ENCODE measurements at regions of chr22 and their contacts with region 1.

Region 1: DNA sequence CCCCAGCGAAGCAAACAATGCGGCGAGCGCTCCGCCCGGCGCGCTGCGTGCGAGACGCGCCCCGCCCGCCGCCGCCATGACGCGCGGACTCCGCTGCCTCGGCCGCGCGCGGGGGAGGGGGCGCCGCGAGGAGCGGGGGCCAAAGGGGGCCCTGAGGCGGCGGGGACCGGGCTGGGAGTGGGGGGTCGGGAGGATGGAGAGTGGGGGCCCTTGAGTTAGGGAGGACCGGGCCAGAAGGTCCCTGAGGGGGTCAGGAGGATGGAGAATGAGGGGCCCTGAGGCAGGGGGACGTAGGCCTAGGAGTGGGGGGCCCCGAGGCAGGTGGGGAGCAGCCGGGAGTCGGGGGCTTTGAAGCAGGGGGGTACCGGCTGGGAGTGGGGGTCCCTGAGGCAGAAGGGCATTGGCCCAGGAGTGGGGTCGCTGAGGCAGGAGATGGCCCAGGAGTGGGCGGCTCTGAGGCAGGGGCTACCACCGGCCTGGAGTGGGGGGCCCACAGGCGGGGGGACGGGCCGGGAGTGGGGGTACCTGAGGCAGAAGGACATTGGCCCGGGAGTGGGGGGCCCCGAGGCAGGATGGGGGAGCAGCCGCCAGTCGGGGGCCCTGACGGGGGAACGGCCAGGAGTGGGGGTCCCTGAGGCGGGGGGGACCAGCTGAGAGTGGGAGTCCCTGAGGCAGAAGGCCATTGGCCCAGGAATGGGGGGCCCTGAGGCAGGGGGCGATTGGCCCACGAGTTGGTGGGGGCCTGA is at the start of gene BRD1:
- DNase-seq: peak in 11 of 14 experiments; percentile 37 to 87 (median 64)
- ATAC-seq: peak; percentile 56
- H3K4me3 ChIP-seq: peak within 1 kb of the TSS; percentile 82
- H3K4me3 Mint-ChIP-seq: peak within 1 kb of the TSS; percentile 98
- H3K27ac ChIP-seq: peak within 1 kb of the TSS; percentile 73 to 80
- H3K27ac Mint-ChIP-seq: peak within 1 kb of the TSS; percentile 97
- H3K4me1 ChIP-seq: peaks cover 63% of the 10 kb centered on the region
- H3K4me1 Mint-ChIP-seq: peaks cover 46% of the 10 kb centered on the region
- H3K27me3 ChIP-seq: no peaks in the 10 kb centered on the region
- H3K27me3 Mint-ChIP-seq: no peaks in the 10 kb centered on the region
- CTCF ChIP-seq: no peak
- total RNA-seq, gene BRD1: 129 to 130 TPM

Region 2: GRCh38 chr22:49789289-49790141 is 38.5 kb before region 1 on chr22:
- CTCF ChIA-PET with region 1: no interaction called
- POLR2A ChIA-PET with region 1: interaction called, 9 read pairs
- intact Hi-C with region 1: loop called in 1 of 2 experiments (anchors 5 kb)
- DNase-seq: peak; percentile 27 to 73 (median 44)
- ATAC-seq: peak; percentile 92
- H3K4me3 ChIP-seq: peak overlapping the region; percentile 32
- H3K4me3 Mint-ChIP-seq: peak overlapping the region; percentile 77
- H3K27ac ChIP-seq: peak overlapping the region; percentile 14 to 40
- H3K27ac Mint-ChIP-seq: peak overlapping the region; percentile 90
- H3K4me1 ChIP-seq: peaks cover 57% of the 10 kb centered on the region
- H3K4me1 Mint-ChIP-seq: peaks cover 58% of the 10 kb centered on the region
- H3K27me3 ChIP-seq: no peaks in the 10 kb centered on the region
- H3K27me3 Mint-ChIP-seq: no peaks in the 10 kb centered on the region
- CTCF ChIP-seq: no peak

Region 3: DNA sequence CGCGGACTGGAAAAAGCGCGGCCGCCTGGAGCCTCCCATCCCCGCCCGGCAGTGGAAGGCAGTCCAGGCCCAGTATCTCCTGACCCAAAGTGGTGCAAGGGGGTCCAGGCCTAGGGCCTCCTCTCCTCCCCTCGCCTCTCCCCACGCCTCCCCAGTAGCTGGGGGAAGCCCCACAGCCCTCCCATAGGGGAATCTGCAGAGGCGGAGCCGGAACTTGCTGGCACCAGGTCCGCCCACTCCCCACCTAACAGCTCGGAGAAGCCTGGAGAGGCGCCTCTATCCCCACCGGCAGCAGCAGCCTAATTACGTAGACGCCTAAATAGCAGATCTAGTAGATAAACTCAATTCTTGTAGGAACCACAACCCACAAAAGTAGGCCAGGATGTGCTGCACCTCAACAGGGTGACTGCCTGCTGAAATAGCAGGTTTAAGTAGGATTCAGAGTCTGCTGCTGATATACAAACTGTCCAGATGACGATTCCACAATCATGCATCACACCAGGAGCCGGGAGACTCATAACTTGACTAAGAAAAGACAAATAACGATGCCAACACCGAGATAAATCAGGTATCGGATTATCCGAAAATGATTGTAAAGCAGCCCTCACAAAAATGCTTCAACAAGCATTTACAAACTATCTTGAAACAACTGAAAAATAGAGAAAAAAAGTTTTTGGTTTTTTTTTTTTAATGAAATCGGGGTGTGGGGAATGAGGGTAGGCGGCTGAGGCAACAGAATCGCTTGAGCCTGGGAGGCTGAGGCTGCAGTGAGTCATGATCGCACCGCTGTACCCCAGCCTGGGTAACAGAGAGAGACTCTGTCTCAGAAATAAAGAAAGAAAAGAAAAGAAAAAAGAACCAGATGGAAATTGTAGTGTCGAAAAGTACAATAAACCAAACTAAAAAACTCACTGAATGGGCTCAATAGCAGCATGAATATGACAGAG is 11.0 kb after region 1 on chr22:
- CTCF ChIA-PET with region 1: no interaction called
- POLR2A ChIA-PET with region 1: interaction called, 24 read pairs
- intact Hi-C with region 1: loop called in 1 of 2 experiments (anchors 1 kb)
- DNase-seq: peak; percentile 75 to 98 (median 84)
- ATAC-seq: peak; percentile 92
- H3K4me3 ChIP-seq: peak overlapping the region; percentile 52
- H3K4me3 Mint-ChIP-seq: peak overlapping the region; percentile 72
- H3K27ac ChIP-seq: peak overlapping the region; percentile 92 to 94
- H3K27ac Mint-ChIP-seq: peak overlapping the region; percentile 93
- H3K4me1 ChIP-seq: peaks cover 30% of the 10 kb centered on the region
- H3K4me1 Mint-ChIP-seq: peaks cover 20% of the 10 kb centered on the region
- H3K27me3 ChIP-seq: no peaks in the 10 kb centered on the region
- H3K27me3 Mint-ChIP-seq: no peaks in the 10 kb centered on the region
- CTCF ChIP-seq: no peak

Region 4: DNA sequence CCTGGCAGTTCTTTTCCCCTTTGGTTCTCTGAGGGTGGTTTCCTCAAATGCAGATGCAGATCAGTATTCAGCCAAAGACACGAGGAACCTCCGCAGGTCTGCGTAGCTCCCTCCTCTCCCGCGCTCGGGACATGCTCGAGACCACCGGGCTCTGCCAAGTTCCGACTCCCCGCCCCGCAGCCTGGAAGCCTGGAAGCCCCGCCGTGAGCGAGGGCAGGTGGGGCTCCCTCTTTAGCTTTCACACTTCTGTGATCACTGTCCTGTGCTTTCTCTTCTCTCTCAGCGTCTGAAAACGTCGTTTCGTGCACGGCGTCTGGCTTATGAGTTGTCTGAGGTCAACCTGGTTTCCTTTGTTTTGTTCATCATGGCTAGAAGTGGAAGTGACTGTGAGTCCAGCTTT is 52.3 kb after region 1 on chr22:
- CTCF ChIA-PET with region 1: no interaction called
- POLR2A ChIA-PET with region 1: no interaction called
- intact Hi-C with region 1: loop called in 1 of 2 experiments (anchors 5 kb)
- DNase-seq: peak in 4 of 14 experiments; percentile 12 to 21 (median 20)
- ATAC-seq: peak; percentile 44
- H3K4me3 ChIP-seq: no peak overlapping the region
- H3K4me3 Mint-ChIP-seq: peak overlapping the region; percentile 49
- H3K27ac ChIP-seq: no peak overlapping the region
- H3K27ac Mint-ChIP-seq: peak overlapping the region; percentile 77
- H3K4me1 ChIP-seq: peaks cover 16% of the 10 kb centered on the region
- H3K4me1 Mint-ChIP-seq: peaks cover 55% of the 10 kb centered on the region
- H3K27me3 ChIP-seq: no peaks in the 10 kb centered on the region
- H3K27me3 Mint-ChIP-seq: no peaks in the 10 kb centered on the region
- CTCF ChIP-seq: no peak

Region 5: DNA sequence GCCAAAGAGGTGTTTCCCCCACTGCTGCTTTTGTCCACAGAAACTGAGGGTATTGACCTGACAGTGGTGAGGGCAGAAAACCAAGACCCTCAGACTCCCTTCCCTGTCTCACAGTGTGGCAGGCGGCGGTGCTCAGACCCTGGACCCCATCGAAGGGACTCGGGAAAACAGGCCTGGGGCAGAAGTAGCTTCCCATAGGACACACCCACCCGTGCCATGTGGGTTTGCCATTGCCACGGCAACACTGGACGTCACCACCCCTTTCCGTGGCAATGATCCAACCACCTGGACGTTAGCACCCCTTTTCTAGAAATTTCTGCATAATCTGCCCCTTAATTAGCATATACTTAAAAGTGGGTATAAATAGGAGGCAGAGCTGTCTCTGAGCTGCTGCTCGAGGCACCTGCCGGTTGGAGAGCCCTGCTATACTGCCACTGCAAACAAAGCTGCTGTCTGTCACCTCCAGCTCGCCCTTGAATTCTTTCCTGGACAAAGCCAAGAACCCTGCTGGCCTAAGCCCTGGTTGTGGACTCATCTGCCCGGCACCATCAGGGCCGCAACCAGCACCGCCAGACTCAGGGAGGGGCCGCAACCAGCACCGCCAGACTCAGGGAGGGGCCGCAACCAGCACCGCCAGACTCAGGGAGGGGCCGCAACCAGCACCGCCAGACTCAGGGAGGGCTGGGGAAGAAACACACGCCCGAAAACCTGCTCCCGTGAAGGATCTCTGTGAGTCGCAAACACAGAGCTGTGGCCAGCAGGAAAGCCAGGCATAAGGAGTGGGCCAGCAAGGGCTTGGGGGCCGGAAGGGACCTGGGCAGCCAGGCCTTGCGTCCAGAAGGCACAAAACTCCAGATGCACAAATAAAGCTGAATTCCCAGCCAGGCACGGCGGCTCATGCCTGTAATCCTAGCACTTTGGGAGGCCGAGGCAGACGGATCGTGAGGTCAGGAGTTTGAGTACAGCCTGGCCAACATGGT is 246.8 kb after region 1 on chr22:
- CTCF ChIA-PET with region 1: no interaction called
- POLR2A ChIA-PET with region 1: no interaction called
- intact Hi-C with region 1: no loop called
- DNase-seq: no peak
- ATAC-seq: no peak
- H3K4me3 ChIP-seq: no peak overlapping the region
- H3K4me3 Mint-ChIP-seq: no peak overlapping the region
- H3K27ac ChIP-seq: no peak overlapping the region
- H3K27ac Mint-ChIP-seq: no peak overlapping the region
- H3K4me1 ChIP-seq: no peaks in the 10 kb centered on the region
- H3K4me1 Mint-ChIP-seq: no peaks in the 10 kb centered on the region
- H3K27me3 ChIP-seq: no peaks in the 10 kb centered on the region
- H3K27me3 Mint-ChIP-seq: no peaks in the 10 kb centered on the region
- CTCF ChIP-seq: no peak